Mammary epithelial cell (primary cell): ENCODE measurements at regions of chr5 and their contacts with region 1.

Region 1: DNA sequence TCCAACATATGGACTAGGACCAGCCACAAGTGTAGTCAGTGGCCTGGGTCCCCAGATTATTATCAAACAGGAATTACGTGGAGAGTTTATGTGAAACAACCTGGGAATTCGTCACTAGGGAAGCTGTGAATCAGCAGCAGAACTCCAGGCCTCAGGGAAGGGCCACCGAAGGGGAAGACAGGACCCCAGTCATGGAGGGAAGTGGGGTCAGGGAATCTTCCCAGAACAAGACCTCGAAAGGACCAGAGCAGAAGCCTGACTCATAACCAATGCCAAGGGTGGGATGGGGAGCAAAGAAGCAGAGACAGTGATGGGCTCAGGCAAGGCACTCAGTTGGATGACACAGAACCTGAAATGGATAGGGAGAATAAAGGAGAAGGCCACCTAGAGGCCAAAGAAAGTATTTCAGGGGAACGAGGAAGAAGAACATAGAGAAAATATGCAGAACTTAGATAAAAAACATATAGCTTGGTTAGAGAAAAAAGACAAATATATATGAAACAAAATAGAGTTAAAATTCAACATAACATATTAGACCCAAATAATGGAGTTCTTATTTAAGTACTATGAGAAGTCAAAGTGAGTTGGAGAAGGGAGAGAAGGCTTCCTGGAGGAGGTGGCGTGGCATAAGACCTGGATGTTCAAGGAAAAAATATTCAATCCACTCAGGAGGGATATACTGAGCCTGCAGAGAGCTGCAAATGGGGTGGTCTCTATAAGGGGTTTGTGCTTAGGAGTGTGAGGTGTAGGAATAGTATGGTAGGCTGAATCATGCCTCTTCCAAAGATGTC is 66.7 kb upstream of the CAST start:
- DNase-seq: peak; percentile 23
- H3K4me3 ChIP-seq: no peak overlapping the region
- H3K27ac ChIP-seq: no peak overlapping the region
- H3K4me1 ChIP-seq: no peaks in the 10 kb centered on the region
- H3K27me3 ChIP-seq: peaks cover 8% of the 10 kb centered on the region
- CTCF ChIP-seq: peak; percentile 50 to 63

Region 2: GRCh38 chr5:96315431-96315830 is 280.1 kb before region 1 on chr5:
- CTCF ChIA-PET with region 1: no interaction called
- dilution Hi-C with region 1: no loop called
- in situ Hi-C with region 1: no loop called
- intact Hi-C with region 1: no loop called
- DNase-seq: no peak
- H3K4me3 ChIP-seq: no peak overlapping the region
- H3K27ac ChIP-seq: no peak overlapping the region
- H3K4me1 ChIP-seq: peaks cover under 1% of the 10 kb centered on the region
- H3K27me3 ChIP-seq: no peaks in the 10 kb centered on the region
- CTCF ChIP-seq: no peak

Region 3: GRCh38 chr5:96509721-96510333 is 85.7 kb before region 1 on chr5:
- CTCF ChIA-PET with region 1: no interaction called
- dilution Hi-C with region 1: no loop called
- in situ Hi-C with region 1: no loop called
- intact Hi-C with region 1: no loop called
- DNase-seq: peak; percentile 79
- H3K4me3 ChIP-seq: no peak overlapping the region
- H3K27ac ChIP-seq: no peak overlapping the region
- H3K4me1 ChIP-seq: no peaks in the 10 kb centered on the region
- H3K27me3 ChIP-seq: no peaks in the 10 kb centered on the region
- CTCF ChIP-seq: no peak

Region 4: DNA sequence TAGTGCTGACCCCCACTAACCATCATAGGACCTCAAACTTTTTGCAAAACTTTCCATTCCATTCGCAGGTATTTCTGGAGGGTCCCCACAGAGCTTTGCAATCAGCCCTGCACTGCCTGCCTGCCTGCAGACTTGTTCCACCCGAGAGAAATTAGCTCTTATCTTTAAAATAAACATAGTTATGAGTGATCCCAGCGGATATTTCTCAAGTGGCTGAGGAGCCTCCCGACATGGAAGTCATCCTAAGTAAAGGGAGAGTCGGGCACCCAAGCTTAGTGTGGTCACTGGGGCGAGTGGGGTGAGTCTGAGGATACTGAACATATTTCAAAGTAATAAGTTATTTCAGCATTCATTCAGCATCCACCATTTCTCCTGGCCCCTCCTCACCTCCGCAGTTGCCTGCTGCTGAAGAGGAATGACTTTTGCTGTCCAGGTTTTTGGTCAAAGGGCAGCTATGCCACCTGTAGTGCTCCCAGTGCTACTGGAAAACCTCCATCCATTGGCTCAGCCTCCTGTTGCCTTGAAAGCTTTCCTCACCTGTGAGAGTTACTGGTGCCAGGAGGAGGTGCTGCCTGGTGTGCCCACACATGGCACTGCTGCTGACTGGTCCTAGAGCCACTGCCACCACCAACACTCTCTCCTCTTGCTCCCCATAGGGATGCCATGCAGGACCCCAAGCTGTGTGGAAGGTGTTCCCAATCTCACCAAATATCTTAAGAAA is 72.7 kb before region 1 on chr5:
- CTCF ChIA-PET with region 1: no interaction called
- dilution Hi-C with region 1: loop called (anchors 5 kb)
- in situ Hi-C with region 1: no loop called
- intact Hi-C with region 1: no loop called
- DNase-seq: no peak
- H3K4me3 ChIP-seq: no peak overlapping the region
- H3K27ac ChIP-seq: no peak overlapping the region
- H3K4me1 ChIP-seq: no peaks in the 10 kb centered on the region
- H3K27me3 ChIP-seq: no peaks in the 10 kb centered on the region
- CTCF ChIP-seq: no peak

Region 5: DNA sequence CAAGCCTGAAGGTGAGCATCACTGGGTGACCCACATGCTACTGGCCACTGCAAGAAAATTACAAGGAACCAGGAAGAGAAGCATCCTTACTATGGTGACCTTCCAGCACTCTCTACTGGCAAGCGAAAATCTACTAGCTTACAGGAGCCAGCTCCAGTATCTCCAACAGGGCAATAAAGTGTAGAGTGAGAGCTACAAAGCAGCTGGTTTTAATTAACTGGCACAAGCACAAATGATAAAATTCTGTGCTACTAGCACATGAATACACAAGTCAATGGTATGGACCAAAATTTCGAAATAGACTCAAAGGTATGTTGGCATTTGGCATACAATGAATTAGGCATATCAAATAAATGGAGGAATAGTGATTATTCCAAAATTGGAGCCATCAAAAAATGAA is 46.5 kb before region 1 on chr5:
- CTCF ChIA-PET with region 1: no interaction called
- dilution Hi-C with region 1: loop called (anchors 5 kb)
- in situ Hi-C with region 1: no loop called
- intact Hi-C with region 1: no loop called
- DNase-seq: no peak
- H3K4me3 ChIP-seq: no peak overlapping the region
- H3K27ac ChIP-seq: no peak overlapping the region
- H3K4me1 ChIP-seq: no peaks in the 10 kb centered on the region
- H3K27me3 ChIP-seq: no peaks in the 10 kb centered on the region
- CTCF ChIP-seq: no peak

Region 6: GRCh38 chr5:96687812-96688453 is 92.4 kb after region 1 on chr5:
- CTCF ChIA-PET with region 1: no interaction called
- dilution Hi-C with region 1: no loop called
- in situ Hi-C with region 1: no loop called
- intact Hi-C with region 1: no loop called
- DNase-seq: no peak
- H3K4me3 ChIP-seq: no peak overlapping the region
- H3K27ac ChIP-seq: no peak overlapping the region
- H3K4me1 ChIP-seq: peaks cover 28% of the 10 kb centered on the region
- H3K27me3 ChIP-seq: no peaks in the 10 kb centered on the region
- CTCF ChIP-seq: peak; percentile 71 to 73

Region 7: DNA sequence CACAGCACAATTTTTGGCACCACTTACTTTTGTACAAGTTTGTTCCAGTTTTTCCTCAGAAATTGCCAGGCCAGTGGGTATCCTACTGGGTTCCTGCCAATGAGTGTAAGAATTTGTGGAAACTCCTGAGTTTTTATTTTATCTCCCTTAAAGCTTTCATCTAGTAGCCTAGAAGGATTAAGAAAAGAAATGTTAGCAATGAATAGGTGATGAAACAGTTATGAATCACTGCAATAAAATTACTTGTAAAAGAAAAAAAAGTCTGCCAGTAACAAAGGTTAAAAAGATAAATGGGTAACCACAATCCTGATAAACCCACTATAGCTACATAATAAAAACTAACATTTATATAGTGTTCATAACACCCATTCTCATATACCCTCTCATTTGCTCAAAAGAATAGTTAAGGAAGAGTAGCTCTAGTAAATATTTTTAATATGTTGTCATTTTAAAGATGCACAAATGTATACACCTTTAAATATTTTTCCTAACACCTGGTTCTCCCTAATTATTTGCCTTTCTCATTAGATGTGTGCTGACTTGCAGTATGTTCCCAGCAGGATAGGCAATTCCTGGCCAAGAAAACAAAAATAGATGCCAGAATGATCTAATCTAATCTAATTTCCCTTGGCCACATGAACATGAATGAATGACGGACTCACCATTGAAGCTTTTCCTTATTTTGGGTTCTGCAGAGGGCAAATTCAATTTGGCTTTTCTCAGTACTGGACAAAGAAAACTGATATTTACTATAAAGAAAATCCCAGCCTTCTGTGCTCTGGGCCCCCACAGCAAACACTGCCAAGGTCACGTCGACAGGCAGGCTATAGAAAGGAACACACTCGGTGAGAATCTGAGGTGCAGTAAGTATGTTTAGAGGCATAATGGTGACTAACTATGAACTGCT is 185.8 kb after region 1 on chr5:
- CTCF ChIA-PET with region 1: no interaction called
- dilution Hi-C with region 1: no loop called
- in situ Hi-C with region 1: no loop called
- intact Hi-C with region 1: no loop called
- DNase-seq: peak; percentile 74
- H3K4me3 ChIP-seq: no peak overlapping the region
- H3K27ac ChIP-seq: peak overlapping the region; percentile 59
- H3K4me1 ChIP-seq: peaks cover 21% of the 10 kb centered on the region
- H3K27me3 ChIP-seq: no peaks in the 10 kb centered on the region
- CTCF ChIP-seq: no peak